ENCODE measurements at regions of chr10 and their contacts with region 1.

Region 1: GRCh38 chr10:97686962-97687784 is at the start of gene AVPI1:
- DNase-seq: peak; percentile 99

Region 2: GRCh38 chr10:97676770-97677581 is 10.2 kb before region 1 on chr10:
- CTCF ChIA-PET with region 1: interaction called, 5 read pairs
- POLR2A ChIA-PET with region 1: interaction called, 14 read pairs
- DNase-seq: peak; percentile 82

Region 3: GRCh38 chr10:97701438-97702069 is 14.4 kb after region 1 on chr10:
- CTCF ChIA-PET with region 1: interaction called, 37 read pairs
- POLR2A ChIA-PET with region 1: interaction called, 14 read pairs
- DNase-seq: peak; percentile 89

Region 4: GRCh38 chr10:97714048-97714371 is 26.8 kb after region 1 on chr10:
- CTCF ChIA-PET with region 1: interaction called, 11 read pairs
- POLR2A ChIA-PET with region 1: interaction called, 42 read pairs
- DNase-seq: peak; percentile 78

Region 5: DNA sequence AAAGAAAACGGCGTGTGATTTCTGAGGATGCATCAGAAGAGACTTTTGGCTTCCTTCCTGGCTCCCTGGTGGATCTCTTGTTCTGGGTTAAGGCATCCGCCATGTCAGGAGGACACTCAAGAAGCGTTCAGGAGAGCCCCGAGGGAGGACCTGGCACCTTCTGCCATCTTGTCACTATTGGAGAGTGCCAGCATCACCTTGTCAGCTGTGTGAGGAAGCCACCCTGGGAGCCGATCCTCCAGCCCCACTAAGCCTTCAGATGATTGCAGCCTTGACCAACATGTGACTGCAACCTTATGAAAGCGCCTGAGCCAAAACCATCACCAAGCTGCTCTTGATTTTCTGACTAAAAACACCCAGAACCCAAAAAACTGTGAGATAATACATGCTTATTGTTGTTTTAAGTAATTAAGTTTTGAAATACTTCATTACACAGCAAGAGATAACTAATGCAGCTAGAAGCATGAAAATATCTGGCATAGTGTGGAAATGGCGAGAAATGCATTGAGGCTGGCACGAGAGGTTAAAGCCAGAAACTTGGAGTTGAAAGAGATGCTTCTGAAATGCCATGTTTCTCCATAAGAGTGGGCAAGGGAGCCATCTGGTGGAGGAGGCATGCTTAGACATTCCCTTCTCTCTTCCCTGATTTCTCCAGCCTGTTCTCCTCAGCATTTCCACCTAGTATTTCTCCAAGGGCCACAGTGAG is 44.3 kb after region 1 on chr10:
- CTCF ChIA-PET with region 1: interaction called, 4 read pairs
- POLR2A ChIA-PET with region 1: interaction called, 30 read pairs
- DNase-seq: peak; percentile 76

Region 6: DNA sequence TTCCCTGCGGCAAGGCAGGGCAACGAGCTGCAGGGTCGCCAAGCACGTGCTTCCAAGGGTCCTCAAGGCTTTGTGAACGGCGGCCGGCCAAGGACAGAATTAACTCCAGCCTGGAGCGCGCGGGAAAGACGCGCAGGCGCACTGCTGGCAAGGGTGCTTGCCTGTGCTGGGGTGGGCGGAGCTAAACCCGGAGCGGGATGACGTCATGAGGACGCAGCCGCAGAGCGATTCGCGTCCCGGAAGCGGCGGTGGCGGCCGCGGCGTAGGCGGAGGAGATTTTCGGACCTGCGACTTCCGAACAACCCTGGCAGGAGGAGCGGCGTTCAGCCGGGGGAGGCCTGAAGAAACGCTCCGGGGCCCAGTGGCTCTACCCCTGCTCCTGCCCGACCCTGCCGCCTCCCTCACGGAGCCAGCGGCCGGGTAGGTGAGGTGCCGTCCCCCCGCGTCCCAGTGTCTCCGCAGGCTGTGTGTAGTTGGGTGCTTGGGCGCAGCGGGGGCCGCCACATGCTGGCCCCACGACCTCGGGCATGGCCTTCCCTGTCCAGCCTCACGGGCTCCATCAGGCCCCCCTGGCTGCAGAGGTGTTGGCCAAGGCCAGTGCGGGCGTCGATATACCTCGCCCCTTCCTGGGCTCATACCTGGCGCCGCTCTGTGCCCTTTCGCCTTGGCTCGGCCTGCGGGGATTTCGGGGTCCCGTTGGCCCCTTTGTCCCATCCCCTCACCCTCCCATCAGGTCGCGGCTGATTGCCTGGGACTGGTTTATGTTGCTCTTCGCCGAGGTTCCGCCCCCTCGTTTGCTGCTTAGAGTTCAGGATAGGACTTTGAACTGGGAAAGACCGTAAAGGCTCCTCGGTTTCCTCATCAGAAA is 50.0 kb after region 1 on chr10 and contains the start of gene ZFYVE27:
- CTCF ChIA-PET with region 1: interaction called, 3 read pairs
- POLR2A ChIA-PET with region 1: interaction called, 30 read pairs
- DNase-seq: peak; percentile 100

Region 7: GRCh38 chr10:97792141-97792721 is 105.1 kb after region 1 on chr10:
- CTCF ChIA-PET with region 1: no interaction called
- POLR2A ChIA-PET with region 1: no interaction called
- DNase-seq: peak; percentile 87

Measured in HEK293T (cell line).